ENCODE measurements at regions of chr14 and their contacts with region 1.

Region 1: DNA sequence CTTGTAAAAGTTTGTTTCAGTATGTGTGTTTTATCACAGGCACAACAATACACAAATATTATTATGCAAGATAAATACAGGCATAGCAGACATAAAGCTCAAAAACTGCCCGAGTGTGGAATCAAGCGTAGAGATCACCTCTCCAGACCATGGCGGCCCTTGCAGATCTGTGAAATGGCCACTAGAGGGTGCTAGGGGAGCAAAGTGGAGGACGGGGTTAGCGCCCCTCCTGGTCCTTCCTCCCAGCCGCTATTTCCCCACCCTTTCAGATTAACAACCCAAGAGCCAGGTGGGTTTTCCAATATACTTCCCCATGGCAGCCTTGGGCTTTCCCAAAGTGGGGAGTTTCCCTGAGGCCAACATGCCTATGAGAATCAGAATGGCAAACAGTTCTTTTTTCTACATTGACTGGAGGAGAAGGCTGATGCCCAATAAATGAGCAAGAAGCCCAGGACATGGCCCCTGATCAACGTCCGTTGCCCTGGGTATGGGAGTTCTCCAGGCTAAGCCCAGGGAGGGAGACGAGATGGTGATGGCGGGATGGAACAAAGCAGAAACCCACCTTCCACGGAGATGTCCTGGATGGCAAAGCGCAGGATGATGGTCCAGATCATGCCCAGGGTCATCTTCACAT is 67.4 kb downstream of the ACTN1 start:
- DNase-seq: peak; percentile 79

Region 2: DNA sequence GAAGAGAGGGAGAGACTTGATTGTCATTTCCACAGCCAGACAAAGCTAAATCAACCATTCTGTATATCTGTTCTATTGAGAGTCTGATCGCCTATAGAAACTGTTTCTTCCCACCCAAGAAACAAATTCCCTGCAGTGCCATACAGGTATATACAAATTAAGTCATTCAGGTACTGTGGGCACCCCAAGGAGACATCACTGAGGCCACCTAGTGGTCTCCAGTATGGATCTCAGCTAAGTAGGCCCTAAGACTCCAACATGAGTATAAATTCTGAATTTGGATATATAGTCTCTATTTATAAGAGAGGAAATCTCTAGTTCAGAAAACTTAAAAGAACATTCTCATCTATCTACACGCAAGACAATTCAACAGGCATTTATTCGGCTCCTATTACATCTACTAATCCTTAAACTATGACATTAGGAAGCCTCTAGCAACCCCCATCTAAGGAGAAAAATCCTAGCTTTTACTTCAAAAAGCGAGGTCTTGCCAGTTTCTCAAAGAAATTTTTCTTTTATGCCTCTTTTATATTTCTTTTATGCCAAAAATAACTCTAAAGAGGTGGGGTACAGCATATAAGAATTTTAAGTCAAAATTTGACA is 178.6 kb after region 1 on chr14:
- in situ Hi-C with region 1: loop called (anchors 25 kb)
- DNase-seq: peak; percentile 38

Measured in KBM-7 (cell line).